Left ventricle myocardium superior (tissue), 1 donor: ENCODE measurements at regions of chr16 and their contacts with region 1.

Region 1: DNA sequence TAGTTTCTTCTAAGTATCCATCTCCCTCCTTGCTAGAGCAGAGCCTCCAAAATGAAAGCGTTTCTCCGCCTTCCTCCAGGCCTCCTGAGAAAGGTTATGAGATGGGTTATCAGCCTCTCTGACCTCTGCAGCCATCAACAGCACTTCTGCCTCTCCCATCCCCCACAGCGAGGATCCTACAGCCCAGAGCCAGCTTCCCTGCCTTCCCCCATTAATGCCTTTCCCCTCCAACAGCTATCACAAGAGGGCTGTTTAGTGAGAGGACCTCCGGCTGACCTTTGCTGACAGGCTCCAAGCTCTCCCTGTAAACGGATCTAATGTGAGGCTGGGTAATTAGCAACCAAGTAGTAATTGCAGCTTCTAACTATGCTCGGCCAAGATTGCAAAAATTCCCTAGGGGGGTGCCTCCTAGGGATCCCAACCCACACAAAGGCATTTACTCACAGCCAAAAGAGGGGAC is 55.8 kb downstream of the ZFHX3 start:
- DNase-seq: no peak
- ATAC-seq: peak; percentile 35

Region 2: GRCh38 chr16:73031155-73031866 is 39.1 kb after region 1 on chr16:
- intact Hi-C with region 1: loop called (anchors 2 kb)
- DNase-seq: no peak
- ATAC-seq: no peak